HEK293T (cell line): ENCODE measurements at regions of chr16 and their contacts with region 1.

Region 1: DNA sequence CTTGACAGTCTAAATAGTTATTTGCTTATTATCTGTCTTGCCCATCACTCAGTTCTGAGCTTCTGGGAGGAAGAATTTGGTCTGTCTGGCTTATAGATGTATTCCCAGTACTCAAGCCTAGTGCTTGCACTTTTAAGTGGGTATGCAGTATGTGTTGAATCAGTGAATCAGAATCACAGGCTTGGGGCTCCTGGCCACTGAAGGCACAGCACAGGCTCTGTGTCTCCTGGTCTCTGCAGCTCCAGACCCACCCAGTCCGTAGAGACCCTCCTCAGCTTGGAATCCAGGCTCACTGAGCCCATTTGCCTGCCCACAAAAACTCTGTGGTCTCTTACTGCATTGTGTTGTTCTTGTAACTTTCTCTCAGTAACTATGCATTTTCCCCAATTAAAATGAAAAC is 19.3 kb upstream of the CFAP20 start:
- DNase-seq: no peak

Region 2: GRCh38 chr16:58025351-58026138 is 123.0 kb before region 1 on chr16 and contains the start of gene MMP15:
- CTCF ChIA-PET with region 1: no interaction called
- POLR2A ChIA-PET with region 1: no interaction called
- DNase-seq: peak; percentile 76

Region 3: DNA sequence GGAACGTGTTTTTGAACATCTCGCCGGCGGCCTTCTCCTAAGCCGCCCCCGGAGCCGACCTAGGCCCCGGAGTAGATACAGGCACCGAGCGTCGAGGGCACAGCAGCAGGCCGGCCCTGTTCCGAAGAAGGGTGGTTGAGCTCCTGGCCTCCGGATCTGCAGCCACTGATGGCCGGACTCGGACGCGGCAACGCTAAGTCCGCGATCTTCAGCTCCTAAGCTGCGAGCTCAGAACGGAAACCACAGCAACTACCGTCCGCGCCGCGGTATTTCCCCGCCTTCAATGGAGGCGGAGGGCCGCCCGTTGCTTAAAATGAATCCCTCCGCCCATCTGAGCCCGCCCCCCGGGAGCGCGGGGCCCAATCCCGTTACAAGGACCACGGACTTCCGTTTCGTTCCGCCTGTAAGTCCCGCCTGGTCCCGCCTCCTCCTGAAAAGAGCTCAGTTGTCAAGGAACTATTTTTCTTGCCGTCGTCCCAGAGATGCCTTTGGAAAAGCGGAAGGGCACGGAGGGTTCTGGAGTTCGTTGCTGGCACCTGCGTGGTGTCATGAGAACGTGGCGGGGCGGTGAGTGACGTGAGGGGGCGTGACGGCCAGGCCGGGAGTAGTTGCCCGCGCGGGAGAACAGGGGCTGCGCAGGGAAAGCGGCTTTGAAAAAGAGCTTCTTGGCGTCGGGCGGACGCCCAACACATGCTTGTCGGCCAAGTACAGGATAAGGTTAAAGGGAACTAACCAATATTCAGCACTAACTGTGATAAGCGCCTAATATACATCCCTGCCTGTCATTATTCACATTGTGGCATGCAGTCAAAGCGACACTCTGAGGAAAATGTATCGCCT is 19.2 kb before region 1 on chr16 and contains the start of gene CFAP20:
- CTCF ChIA-PET with region 1: interaction called, 3 read pairs
- POLR2A ChIA-PET with region 1: interaction called, 24 read pairs
- DNase-seq: peak; percentile 90